Activated CD4-positive, alpha-beta T cell treated with anti-CD3 and anti-CD28 coated beads, Interleukin-2, amount 10 ng/mL, durations not matched to agents 24 days and 14 days (primary cell): ENCODE measurements at regions of chr20 and their contacts with region 1.

Region 1: GRCh38 chr20:51164731-51165130 is 141.8 kb upstream of the KCNG1 start:
- DNase-seq: no peak
- H3K4me3 Mint-ChIP-seq: no peak overlapping the region
- H3K27ac Mint-ChIP-seq: no peak overlapping the region
- H3K4me1 Mint-ChIP-seq: peaks cover 2% of the 10 kb centered on the region
- H3K27me3 Mint-ChIP-seq: no peaks in the 10 kb centered on the region

Region 2: DNA sequence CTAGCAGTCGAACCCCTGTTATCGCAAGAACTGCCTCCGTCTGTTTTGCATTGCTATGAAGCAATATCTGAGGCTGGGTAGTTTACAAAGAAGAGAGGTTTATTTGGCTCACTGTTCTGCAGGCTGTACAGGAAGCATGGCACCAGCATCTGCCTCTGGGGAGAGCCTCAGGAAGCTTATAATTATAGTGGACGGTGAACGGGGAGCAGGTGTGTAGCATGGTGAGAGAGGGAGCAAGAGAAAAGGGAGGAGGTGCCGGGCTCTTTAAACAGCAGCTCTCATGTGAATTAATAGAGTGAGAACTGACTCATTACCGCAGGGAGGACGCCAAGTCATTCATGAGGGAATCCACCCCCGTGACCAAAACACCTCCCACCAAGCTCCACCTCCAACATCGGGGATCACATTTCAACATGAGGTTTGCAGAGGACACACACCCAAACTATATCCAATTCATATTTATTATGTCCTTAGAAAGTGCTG is 30.7 kb after region 1 on chr20:
- intact Hi-C with region 1: loop called (anchors 1 kb)
- DNase-seq: no peak
- H3K4me3 Mint-ChIP-seq: no peak overlapping the region
- H3K27ac Mint-ChIP-seq: no peak overlapping the region
- H3K4me1 Mint-ChIP-seq: no peaks in the 10 kb centered on the region
- H3K27me3 Mint-ChIP-seq: peaks cover 3% of the 10 kb centered on the region